Natural killer cell (primary cell): ENCODE measurements at regions of chr14 and their contacts with region 1.

Region 1: GRCh38 chr14:93033983-93034670 is 81.6 kb downstream of the ITPK1 start:
- DNase-seq: peak; percentile 53 to 69
- ATAC-seq: peak; percentile 58 to 70 (median 61)
- H3K4me3 ChIP-seq: no peak overlapping the region
- H3K4me3 Mint-ChIP-seq: peak overlapping the region; percentile 60
- H3K27ac ChIP-seq: peak overlapping the region; percentile 91
- H3K27ac Mint-ChIP-seq: peak overlapping the region; percentile 65 to 84
- H3K4me1 ChIP-seq: peaks cover 55% of the 10 kb centered on the region
- H3K4me1 Mint-ChIP-seq: peaks cover 35 to 69% of the 10 kb centered on the region in 2 donors
- H3K27me3 ChIP-seq: no peaks in the 10 kb centered on the region
- H3K27me3 Mint-ChIP-seq: no peaks in the 10 kb centered on the region
- CTCF ChIP-seq: peak; percentile 78

Region 2: GRCh38 chr14:92922883-92923743 is 111.0 kb before region 1 on chr14 and contains the start of gene CHGA:
- intact Hi-C with region 1: no loop called
- DNase-seq: peak; percentile 56 to 64
- ATAC-seq: peak in 2 of 3 donors; percentile 81 to 88
- H3K4me3 ChIP-seq: no peak within 1 kb of the TSS
- H3K4me3 Mint-ChIP-seq: no peak within 1 kb of the TSS
- H3K27ac ChIP-seq: no peak within 1 kb of the TSS
- H3K27ac Mint-ChIP-seq: no peak within 1 kb of the TSS
- H3K4me1 ChIP-seq: no peaks in the 10 kb centered on the region
- H3K4me1 Mint-ChIP-seq: peaks cover 6 to 15% of the 10 kb centered on the region in 2 donors
- H3K27me3 ChIP-seq: peaks cover 5% of the 10 kb centered on the region
- H3K27me3 Mint-ChIP-seq: peaks cover 11 to 29% of the 10 kb centered on the region in 2 donors
- CTCF ChIP-seq: no peak
- total RNA-seq, gene CHGA: not detected

Region 3: GRCh38 chr14:93067088-93067487 is 33.0 kb after region 1 on chr14:
- intact Hi-C with region 1: loop called (anchors 2 kb)
- DNase-seq: no peak
- ATAC-seq: no peak
- H3K4me3 ChIP-seq: no peak overlapping the region
- H3K4me3 Mint-ChIP-seq: peak overlapping the region; percentile 53
- H3K27ac ChIP-seq: no peak overlapping the region
- H3K27ac Mint-ChIP-seq: peak overlapping the region; percentile 76 to 84
- H3K4me1 ChIP-seq: peaks cover 37% of the 10 kb centered on the region
- H3K4me1 Mint-ChIP-seq: peaks cover 34 to 50% of the 10 kb centered on the region in 2 donors
- H3K27me3 ChIP-seq: no peaks in the 10 kb centered on the region
- H3K27me3 Mint-ChIP-seq: no peaks in the 10 kb centered on the region
- CTCF ChIP-seq: no peak

Region 4: DNA sequence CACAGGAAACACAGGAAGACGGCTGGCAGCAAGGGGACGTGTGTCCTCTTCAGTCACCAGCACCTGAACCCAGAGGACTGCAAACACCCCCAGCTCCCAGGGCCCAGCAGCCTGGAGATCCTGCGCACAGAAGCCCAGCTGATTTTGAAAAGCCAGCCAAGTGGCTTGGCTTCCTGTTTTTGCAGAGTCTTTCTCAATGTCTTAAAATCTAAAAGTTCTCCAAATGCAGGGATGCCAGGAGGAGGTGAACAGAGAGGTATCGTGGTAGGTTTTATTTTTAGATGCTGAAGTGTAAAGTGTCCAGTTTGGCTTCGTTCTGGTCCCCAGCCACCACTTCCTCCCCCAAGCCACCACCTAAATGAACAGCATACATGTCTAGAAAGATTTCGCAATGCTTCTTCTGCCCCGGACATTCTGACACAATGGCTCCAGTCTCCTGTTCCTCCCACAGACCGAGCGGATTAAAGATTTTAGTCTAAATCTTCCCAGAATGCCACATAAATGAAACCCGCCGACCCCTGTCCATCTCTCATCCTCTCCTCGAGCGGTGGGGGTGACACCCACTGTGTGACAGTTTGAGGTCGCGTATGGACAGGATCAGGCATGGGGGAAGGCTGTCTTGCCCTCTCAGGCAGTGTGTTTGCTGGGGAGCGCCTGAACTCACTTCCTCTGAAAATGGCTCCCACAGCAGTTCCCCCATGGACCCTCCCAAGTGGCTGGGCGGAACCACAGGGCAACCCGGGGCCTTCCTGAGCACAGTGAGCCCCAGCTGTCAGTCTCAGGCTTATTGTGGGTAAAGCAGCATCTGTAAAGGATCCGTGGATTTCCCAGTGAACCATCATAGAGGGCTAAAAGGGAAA is 40.0 kb after region 1 on chr14:
- intact Hi-C with region 1: loop called (anchors 2 kb)
- DNase-seq: peak; percentile 23 to 37
- ATAC-seq: peak; percentile 71 to 74 (median 72)
- H3K4me3 ChIP-seq: no peak overlapping the region
- H3K4me3 Mint-ChIP-seq: peak overlapping the region; percentile 65
- H3K27ac ChIP-seq: peak overlapping the region; percentile 83
- H3K27ac Mint-ChIP-seq: peak overlapping the region; percentile 91 to 95
- H3K4me1 ChIP-seq: peaks cover 62% of the 10 kb centered on the region
- H3K4me1 Mint-ChIP-seq: peaks cover 54 to 68% of the 10 kb centered on the region in 2 donors
- H3K27me3 ChIP-seq: no peaks in the 10 kb centered on the region
- H3K27me3 Mint-ChIP-seq: no peaks in the 10 kb centered on the region
- CTCF ChIP-seq: no peak

Region 5: DNA sequence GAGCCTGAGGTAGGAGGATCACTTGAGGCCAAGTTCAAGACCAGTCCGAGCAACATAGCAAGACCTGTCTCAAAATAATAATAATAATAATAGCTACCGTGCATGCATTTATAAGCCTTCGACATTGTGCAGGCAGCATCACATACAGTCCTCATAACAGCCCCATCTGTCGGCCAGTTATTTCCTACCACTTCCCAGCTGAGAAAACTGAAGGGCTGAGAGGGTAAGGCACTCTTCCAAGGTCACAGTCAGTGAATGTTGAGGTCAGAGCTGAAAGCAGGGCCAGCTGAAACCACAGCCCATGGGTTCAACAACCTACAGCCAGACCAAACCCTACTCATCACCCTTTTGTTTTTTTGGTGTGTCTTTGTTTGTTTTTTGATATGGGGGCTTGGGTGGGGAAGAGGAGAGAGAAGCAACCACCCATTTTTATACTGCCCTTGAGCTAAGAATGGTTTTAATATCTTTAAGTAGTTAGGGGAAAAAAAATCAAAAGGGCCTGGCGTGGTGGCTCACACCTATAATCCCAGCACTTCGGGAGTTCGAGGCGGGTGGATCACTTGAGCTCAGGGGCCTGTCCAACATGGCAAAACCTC is 98.4 kb after region 1 on chr14:
- intact Hi-C with region 1: loop called (anchors 1 kb)
- DNase-seq: peak in 1 of 2 donors; percentile 65
- ATAC-seq: peak; percentile 58 to 77 (median 74)
- H3K4me3 ChIP-seq: no peak overlapping the region
- H3K4me3 Mint-ChIP-seq: no peak overlapping the region
- H3K27ac ChIP-seq: no peak overlapping the region
- H3K27ac Mint-ChIP-seq: no peak overlapping the region
- H3K4me1 ChIP-seq: no peaks in the 10 kb centered on the region
- H3K4me1 Mint-ChIP-seq: peaks cover 4 to 5% of the 10 kb centered on the region in 2 donors
- H3K27me3 ChIP-seq: no peaks in the 10 kb centered on the region
- H3K27me3 Mint-ChIP-seq: peaks cover 0 to 2% of the 10 kb centered on the region in 2 donors
- CTCF ChIP-seq: peak; percentile 36

Region 6: DNA sequence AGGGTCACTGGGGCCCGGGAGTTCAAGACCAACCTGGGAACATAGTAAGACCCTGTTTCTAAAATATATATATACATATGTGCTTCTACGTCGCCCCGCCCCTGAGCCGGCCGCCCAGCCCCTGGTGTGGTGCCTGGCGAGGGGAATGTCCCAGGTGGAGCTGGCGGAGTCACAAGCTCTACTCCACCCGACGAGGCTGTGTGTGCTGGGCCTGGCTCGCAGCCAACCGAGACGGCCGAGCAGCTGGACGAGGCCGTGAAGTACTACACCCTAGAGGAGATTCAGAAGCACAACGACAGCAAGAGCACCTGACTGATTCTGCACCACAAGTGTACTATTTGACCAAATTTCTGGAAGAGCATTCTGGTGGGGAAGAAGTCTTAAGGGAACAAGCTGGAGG is 103.7 kb after region 1 on chr14:
- intact Hi-C with region 1: loop called (anchors 1 kb)
- DNase-seq: no peak
- ATAC-seq: no peak
- H3K4me3 ChIP-seq: no peak overlapping the region
- H3K4me3 Mint-ChIP-seq: no peak overlapping the region
- H3K27ac ChIP-seq: no peak overlapping the region
- H3K27ac Mint-ChIP-seq: no peak overlapping the region
- H3K4me1 ChIP-seq: no peaks in the 10 kb centered on the region
- H3K4me1 Mint-ChIP-seq: peaks cover 5 to 6% of the 10 kb centered on the region in 2 donors
- H3K27me3 ChIP-seq: no peaks in the 10 kb centered on the region
- H3K27me3 Mint-ChIP-seq: no peaks in the 10 kb centered on the region
- CTCF ChIP-seq: no peak